ENCODE measurements at regions of chr15 and their contacts with region 1.

Region 1: DNA sequence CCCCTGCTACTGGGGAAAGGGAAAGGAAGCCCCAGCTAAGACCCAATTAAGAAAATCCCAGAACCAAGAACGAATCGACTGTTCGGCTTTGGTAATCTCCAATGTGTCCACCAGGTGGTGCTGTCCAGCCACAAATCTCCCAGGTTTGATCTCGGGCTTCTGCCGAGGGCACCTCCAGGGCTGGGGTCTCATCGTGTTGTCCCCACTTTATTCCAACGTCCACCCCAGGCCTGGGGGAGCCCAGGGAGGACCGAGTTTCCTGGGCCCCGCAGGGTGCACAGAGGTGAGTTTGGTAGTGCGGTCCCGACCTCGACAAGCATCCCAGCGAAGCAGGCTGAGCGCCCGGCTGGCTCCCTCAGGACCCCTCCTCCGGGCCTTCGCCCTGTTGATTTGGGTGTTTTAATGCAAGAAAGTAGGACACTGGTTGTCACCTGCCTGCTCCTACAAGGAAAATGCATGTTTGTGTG is 185.1 kb downstream of the GOLGA6L6 start:
- DNase-seq: peak; percentile 52 to 85 (median 67)
- ATAC-seq: peak; percentile 23 to 65 (median 42)
- H3K4me3 ChIP-seq: no peak overlapping the region
- H3K27ac ChIP-seq: no peak overlapping the region
- H3K4me1 ChIP-seq: peaks cover 0 to 3% (median 0%) of the 10 kb centered on the region in 12 donors
- H3K27me3 ChIP-seq: peaks cover 0 to 57% (median 3%) of the 10 kb centered on the region in 9 donors
- CTCF ChIP-seq: peak; percentile 77 to 99 (median 91)
- POLR2A ChIP-seq: no peak

Region 2: DNA sequence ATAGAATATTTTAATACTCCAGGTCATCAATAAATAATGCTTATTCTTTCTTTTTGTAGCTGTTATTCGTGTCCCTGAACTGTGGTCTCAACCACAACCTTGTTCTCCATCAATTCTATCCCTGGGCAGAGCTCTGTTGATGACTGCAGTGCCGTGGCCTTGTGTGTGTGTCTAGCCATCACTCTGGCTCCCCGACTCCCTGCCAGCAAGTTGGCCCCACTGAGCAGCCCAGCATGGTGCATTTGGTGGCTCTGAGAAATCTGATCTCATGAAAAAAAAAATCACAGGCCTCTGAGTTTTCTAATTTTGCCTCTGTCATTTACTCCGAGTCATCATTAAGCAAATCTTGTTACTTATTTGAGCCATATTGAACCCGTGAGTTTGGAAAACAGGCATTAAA is 20.4 kb after region 1 on chr15:
- intact Hi-C with region 1: loop called in 1 of 10 experiments (anchors 2 kb)
- DNase-seq: peak in 1 of 5 donors; percentile 53
- ATAC-seq: no peak
- H3K4me3 ChIP-seq: no peak overlapping the region
- H3K27ac ChIP-seq: no peak overlapping the region
- H3K4me1 ChIP-seq: no peaks in the 10 kb centered on the region
- H3K27me3 ChIP-seq: peaks cover 0 to 3% (median 0%) of the 10 kb centered on the region in 9 donors
- CTCF ChIP-seq: no peak
- POLR2A ChIP-seq: no peak

Region 3: GRCh38 chr15:22229971-22230815 is 1873.7 kb after region 1 on chr15:
- intact Hi-C with region 1: loop called in 1 of 10 experiments (anchors 10 kb)
- DNase-seq: no peak
- ATAC-seq: no peak
- H3K4me3 ChIP-seq: no peak overlapping the region
- H3K27ac ChIP-seq: no peak overlapping the region
- H3K4me1 ChIP-seq: peaks cover 0 to 5% (median 0%) of the 10 kb centered on the region in 12 donors
- H3K27me3 ChIP-seq: peaks cover 0 to 21% (median 0%) of the 10 kb centered on the region in 9 donors
- CTCF ChIP-seq: no peak
- POLR2A ChIP-seq: no peak

Region 4: GRCh38 chr15:22253676-22254408 is 1897.4 kb after region 1 on chr15:
- intact Hi-C with region 1: loop called in 2 of 10 experiments (anchors 5 kb)
- DNase-seq: no peak
- ATAC-seq: no peak
- H3K4me3 ChIP-seq: no peak overlapping the region
- H3K27ac ChIP-seq: no peak overlapping the region
- H3K4me1 ChIP-seq: peaks cover 0 to 14% (median 0%) of the 10 kb centered on the region in 12 donors
- H3K27me3 ChIP-seq: peaks cover 0 to 35% (median 0%) of the 10 kb centered on the region in 9 donors
- CTCF ChIP-seq: no peak
- POLR2A ChIP-seq: no peak